Posterior cingulate gyrus (tissue), 11 donors: ENCODE measurements at regions of chr12 and their contacts with region 1.

Region 1: DNA sequence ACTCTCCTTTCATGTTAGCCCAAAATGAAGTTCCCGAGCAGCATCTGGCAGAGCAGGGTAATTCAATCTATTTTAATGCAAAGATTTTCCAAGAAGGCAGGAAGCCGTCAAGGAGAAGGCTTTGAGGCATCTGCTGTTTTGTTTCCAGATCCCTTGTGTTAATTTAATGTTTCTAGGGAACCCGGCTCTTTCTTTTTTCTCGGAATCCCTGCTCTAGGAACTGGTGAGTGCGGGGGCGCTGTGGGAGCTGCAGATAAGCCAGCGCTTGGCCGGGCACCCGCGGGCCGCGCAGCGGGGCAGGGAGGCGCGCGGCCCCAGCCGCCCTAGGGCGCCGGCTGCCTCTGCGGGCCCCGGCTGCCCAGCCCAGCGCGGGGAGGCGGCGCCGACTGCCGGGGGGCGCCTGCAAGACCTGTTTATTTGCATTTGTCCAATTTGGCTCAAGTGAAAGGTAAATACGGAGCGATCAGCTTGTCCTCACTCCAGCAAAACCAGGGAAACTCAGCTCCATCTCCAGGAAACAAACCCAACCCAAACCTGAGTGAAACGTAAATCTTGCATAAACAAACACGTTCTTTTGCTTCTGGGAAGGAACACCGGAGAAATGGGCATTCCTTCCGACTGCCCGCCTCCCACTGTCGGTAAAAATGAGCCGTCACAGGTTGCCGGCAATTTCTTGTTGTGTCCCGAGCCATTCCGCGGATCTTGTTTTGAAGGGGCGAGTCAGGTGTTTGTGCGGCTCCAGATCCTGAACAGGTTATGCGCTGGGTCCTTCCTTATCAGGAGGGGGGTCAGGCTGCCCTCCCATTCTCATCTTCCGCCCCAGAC is 65.1 kb downstream of the CRADD start:
- DNase-seq: peak; percentile 56 to 95 (median 74)

Region 2: DNA sequence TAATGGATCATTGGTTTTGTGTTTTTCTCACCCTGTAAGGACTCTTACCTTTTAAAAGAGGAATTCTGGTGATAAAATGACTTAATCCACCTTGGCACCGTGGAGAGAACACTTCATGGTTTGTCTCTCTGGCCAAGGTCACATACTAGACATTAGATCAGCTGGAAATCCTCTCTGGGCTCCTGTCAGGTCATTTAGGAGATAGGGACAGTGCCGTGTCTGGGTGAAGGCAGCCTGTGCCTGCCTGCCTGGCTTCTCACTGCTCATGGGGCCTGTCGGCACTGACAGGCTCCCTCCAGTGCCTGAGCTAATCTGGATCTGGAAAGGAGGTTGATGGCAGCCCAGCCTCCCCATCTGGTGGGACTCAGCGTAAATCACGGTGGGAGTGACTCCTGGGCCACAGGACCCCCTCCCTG is 59.5 kb before region 1 on chr12:
- intact Hi-C with region 1: loop called (anchors 5 kb)
- DNase-seq: no peak